OCI-LY7 (cell line): ENCODE measurements at regions of chr9 and their contacts with region 1.

Region 1: DNA sequence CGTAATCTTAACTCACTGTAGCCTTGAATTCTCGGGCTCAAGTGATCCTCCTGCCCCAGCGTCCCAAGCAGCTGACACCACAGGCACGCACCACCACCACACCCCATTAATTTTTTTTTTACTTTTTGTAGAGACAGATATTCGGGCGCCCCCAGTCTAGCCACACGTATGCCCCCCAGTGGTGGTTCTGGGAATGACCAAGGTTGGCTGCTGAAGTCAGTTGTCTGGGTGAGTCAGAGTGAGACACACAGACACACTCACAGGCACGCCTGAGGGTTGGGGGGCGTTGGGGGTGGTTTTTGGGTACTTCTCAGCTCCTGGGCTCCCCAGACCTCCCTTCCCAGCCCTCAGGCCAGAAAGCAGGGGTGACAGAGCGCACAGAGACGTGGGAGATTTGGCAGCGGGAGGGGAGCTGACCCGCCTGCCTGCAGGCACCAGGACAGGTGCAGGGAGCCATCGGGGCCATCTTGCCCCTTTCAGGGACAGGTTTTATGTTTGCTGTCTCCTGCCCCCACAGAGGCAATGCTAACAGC is 4.2 kb upstream of the ENTPD8 start:
- DNase-seq: peak; percentile 75
- H3K4me3 ChIP-seq: no peak overlapping the region
- H3K27ac ChIP-seq: no peak overlapping the region
- H3K4me1 ChIP-seq: peaks cover 5% of the 10 kb centered on the region
- CTCF ChIP-seq: peak; percentile 89

Region 2: GRCh38 chr9:137286975-137287383 is 158.4 kb before region 1 on chr9:
- CTCF ChIA-PET with region 1: no interaction called
- POLR2A ChIA-PET with region 1: no interaction called
- intact Hi-C with region 1: loop called (anchors 5 kb)
- DNase-seq: peak; percentile 75
- H3K4me3 ChIP-seq: no peak overlapping the region
- H3K27ac ChIP-seq: peak overlapping the region; percentile 84
- H3K4me1 ChIP-seq: peaks cover 40% of the 10 kb centered on the region
- CTCF ChIP-seq: peak; percentile 77

Region 3: GRCh38 chr9:137302176-137302994 is 143.0 kb before region 1 on chr9 and contains the start of gene NRARP:
- CTCF ChIA-PET with region 1: no interaction called
- POLR2A ChIA-PET with region 1: no interaction called
- intact Hi-C with region 1: loop called (anchors 5 kb)
- DNase-seq: peak; percentile 91
- H3K4me3 ChIP-seq: peak within 1 kb of the TSS; percentile 60
- H3K27ac ChIP-seq: no peak within 1 kb of the TSS
- H3K4me1 ChIP-seq: peaks cover 48% of the 10 kb centered on the region
- CTCF ChIP-seq: peak; percentile 68
- total RNA-seq, gene NRARP: 6.9 TPM in 2 replicates